ENCODE measurements at regions of chr9 and their contacts with region 1.

Region 1: GRCh38 chr9:125558453-125559092 is 148.4 kb downstream of the MAPKAP1 start:
- DNase-seq: peak; percentile 43
- ATAC-seq: peak; percentile 68 to 84

Region 2: GRCh38 chr9:124960409-124960752 is 598.2 kb before region 1 on chr9:
- intact Hi-C with region 1: no loop called
- DNase-seq: no peak
- ATAC-seq: no peak

Region 3: GRCh38 chr9:125631391-125632085 is 73.0 kb after region 1 on chr9:
- intact Hi-C with region 1: loop called in 1 of 2 experiments (anchors 2 kb)
- DNase-seq: no peak
- ATAC-seq: peak; percentile 64 to 67

Region 4: GRCh38 chr9:126228781-126229444 is 670.3 kb after region 1 on chr9:
- intact Hi-C with region 1: loop called in 1 of 2 experiments (anchors 10 kb)
- DNase-seq: peak; percentile 71
- ATAC-seq: peak; percentile 91 to 95